Naive thymus-derived CD4-positive, alpha-beta T cell (primary cell): ENCODE measurements at regions of chr4 and their contacts with region 1.

Region 1: DNA sequence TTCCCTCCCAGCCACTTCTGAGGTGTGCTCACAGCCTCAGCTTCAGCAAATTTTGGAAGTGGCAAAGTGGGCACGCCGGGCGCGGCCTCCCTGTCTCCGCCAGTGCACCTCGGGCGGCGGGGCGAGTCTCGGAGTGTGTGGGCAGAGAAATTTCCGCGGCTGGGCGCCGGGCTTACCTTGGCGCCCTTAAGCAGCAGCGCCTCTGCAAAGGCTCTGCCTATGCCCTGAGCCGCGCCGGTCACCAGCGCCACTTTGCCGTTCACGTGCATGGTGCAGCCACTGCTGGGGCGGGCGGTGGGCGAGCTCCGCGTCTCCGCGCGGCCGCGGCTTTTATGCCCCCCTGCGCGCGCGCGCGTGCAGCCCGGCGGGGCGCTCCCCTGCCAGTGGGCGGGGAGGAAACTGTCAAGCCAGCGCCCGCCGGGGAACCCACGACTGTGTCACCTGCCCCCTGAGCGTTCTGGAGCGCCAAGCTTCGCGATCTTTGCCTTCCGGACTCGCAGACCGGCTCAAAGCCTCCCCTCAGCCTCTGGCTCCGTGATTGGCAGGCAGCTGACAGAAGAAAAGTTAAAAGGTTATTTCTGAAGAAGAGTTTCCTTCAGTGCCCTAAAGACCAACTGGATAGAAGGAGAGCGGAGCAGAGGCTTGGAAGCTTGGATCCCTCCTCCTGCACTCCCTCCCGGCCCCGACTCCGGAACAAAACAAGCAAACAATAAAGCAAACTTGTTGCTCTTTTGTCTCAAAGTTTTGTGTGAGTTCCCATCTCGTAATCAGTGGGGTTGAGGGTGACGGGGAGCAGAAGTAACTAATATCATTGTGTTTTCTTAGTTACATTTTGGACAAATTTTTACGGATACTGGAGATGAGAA is at the start of gene HPGD:
- DNase-seq: peak; percentile 33 to 79 (median 67)
- ATAC-seq: peak; percentile 90
- H3K4me3 ChIP-seq: peak within 1 kb of the TSS; percentile 66
- H3K4me3 Mint-ChIP-seq: peak within 1 kb of the TSS; percentile 77 to 91 (median 88)
- H3K27ac ChIP-seq: peak within 1 kb of the TSS; percentile 38
- H3K27ac Mint-ChIP-seq: peak within 1 kb of the TSS in 7 of 9 donors; percentile 6 to 93 (median 86)
- H3K4me1 ChIP-seq: peaks cover 0 to 5% of the 10 kb centered on the region in 2 donors
- H3K4me1 Mint-ChIP-seq: peaks cover 0 to 45% (median 17%) of the 10 kb centered on the region in 7 donors
- H3K27me3 ChIP-seq: peaks cover 0 to 4% of the 10 kb centered on the region in 2 donors
- H3K27me3 Mint-ChIP-seq: peaks cover 23 to 52% (median 38%) of the 10 kb centered on the region in 5 donors
- total RNA-seq, gene HPGD: 2.5 to 13.5 (median 4.6) TPM

Region 2: DNA sequence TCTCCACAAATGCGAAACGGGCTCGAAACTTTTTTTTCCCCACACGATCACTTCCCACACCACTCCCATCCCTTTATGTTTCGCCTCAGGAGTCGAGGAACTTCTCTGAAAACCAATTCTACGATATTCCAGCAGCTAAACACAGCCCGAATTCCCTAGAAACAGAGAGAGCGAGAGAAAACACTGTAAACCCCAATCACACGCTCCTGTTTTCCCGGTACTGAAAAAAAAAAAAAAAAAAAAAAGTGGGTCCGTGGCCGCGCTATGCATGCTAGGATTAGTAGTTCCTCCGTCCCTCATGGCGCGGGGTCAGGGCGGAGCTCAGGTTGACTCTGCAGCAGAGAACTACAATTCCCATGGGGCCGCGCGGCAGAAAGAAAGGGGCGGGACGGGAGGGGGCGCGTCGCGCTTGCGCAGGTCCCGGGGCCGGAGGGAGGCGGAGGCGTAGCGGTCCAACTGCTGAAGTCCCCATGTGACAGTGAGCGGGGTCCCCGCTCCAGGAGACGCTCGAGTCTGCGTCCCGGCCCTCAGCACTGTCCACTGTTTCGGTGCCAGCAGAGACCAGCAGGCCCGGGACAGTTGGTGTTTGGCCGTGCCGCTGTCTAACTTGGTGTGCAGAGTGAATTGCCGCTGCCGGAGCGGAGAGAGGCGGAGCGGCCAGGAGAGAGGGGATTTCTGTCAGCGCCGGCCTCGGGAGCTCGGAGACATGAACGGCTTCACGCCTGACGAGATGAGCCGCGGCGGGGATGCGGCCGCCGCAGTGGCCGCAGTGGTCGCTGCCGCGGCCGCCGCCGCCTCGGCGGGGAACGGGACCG is 1151.7 kb before region 1 on chr4 and contains the start of gene SAP30:
- CTCF ChIA-PET with region 1: no interaction called
- POLR2A ChIA-PET with region 1: no interaction called
- intact Hi-C with region 1: loop called in 1 of 2 experiments (anchors 5 kb)
- DNase-seq: peak; percentile 88 to 97 (median 91)
- ATAC-seq: peak; percentile 91
- H3K4me3 ChIP-seq: peak within 1 kb of the TSS; percentile 99
- H3K4me3 Mint-ChIP-seq: peak within 1 kb of the TSS; percentile 89 to 100 (median 98)
- H3K27ac ChIP-seq: peak within 1 kb of the TSS; percentile 82
- H3K27ac Mint-ChIP-seq: peak within 1 kb of the TSS; percentile 88 to 99 (median 97)
- H3K4me1 ChIP-seq: peaks cover 5 to 20% of the 10 kb centered on the region in 2 donors
- H3K4me1 Mint-ChIP-seq: peaks cover 14 to 46% (median 18%) of the 10 kb centered on the region in 7 donors
- H3K27me3 ChIP-seq: peaks cover 0 to 10% of the 10 kb centered on the region in 2 donors
- H3K27me3 Mint-ChIP-seq: peaks cover 2 to 29% (median 17%) of the 10 kb centered on the region in 5 donors
- total RNA-seq, gene SAP30: 0.48 to 27.4 (median 1.1) TPM

Region 3: GRCh38 chr4:174358829-174359228 is 163.6 kb before region 1 on chr4:
- CTCF ChIA-PET with region 1: no interaction called
- POLR2A ChIA-PET with region 1: no interaction called
- intact Hi-C with region 1: loop called (anchors 2 to 5 kb)
- DNase-seq: no peak
- ATAC-seq: peak; percentile 26
- H3K4me3 ChIP-seq: no peak overlapping the region
- H3K4me3 Mint-ChIP-seq: no peak overlapping the region
- H3K27ac ChIP-seq: no peak overlapping the region
- H3K27ac Mint-ChIP-seq: no peak overlapping the region
- H3K4me1 ChIP-seq: no peaks in the 10 kb centered on the region
- H3K4me1 Mint-ChIP-seq: peaks cover 0 to 23% (median 0%) of the 10 kb centered on the region in 7 donors
- H3K27me3 ChIP-seq: peaks cover 0 to 2% of the 10 kb centered on the region in 2 donors
- H3K27me3 Mint-ChIP-seq: peaks cover 8 to 28% (median 21%) of the 10 kb centered on the region in 5 donors

Region 4: GRCh38 chr4:174423257-174423944 is 99.0 kb before region 1 on chr4:
- CTCF ChIA-PET with region 1: no interaction called
- POLR2A ChIA-PET with region 1: no interaction called
- intact Hi-C with region 1: loop called in 1 of 2 experiments (anchors 2 kb)
- DNase-seq: peak in 5 of 9 donors; percentile 7 to 39 (median 27)
- ATAC-seq: peak; percentile 63
- H3K4me3 ChIP-seq: no peak overlapping the region
- H3K4me3 Mint-ChIP-seq: peak overlapping the region in 9 of 10 donors; percentile 8 to 72 (median 58)
- H3K27ac ChIP-seq: no peak overlapping the region
- H3K27ac Mint-ChIP-seq: peak overlapping the region in 2 of 9 donors; percentile 45 to 52
- H3K4me1 ChIP-seq: peaks cover 0 to 4% of the 10 kb centered on the region in 2 donors
- H3K4me1 Mint-ChIP-seq: peaks cover 6 to 43% (median 29%) of the 10 kb centered on the region in 7 donors
- H3K27me3 ChIP-seq: no peaks in the 10 kb centered on the region
- H3K27me3 Mint-ChIP-seq: peaks cover 0 to 27% (median 7%) of the 10 kb centered on the region in 5 donors

Region 5: DNA sequence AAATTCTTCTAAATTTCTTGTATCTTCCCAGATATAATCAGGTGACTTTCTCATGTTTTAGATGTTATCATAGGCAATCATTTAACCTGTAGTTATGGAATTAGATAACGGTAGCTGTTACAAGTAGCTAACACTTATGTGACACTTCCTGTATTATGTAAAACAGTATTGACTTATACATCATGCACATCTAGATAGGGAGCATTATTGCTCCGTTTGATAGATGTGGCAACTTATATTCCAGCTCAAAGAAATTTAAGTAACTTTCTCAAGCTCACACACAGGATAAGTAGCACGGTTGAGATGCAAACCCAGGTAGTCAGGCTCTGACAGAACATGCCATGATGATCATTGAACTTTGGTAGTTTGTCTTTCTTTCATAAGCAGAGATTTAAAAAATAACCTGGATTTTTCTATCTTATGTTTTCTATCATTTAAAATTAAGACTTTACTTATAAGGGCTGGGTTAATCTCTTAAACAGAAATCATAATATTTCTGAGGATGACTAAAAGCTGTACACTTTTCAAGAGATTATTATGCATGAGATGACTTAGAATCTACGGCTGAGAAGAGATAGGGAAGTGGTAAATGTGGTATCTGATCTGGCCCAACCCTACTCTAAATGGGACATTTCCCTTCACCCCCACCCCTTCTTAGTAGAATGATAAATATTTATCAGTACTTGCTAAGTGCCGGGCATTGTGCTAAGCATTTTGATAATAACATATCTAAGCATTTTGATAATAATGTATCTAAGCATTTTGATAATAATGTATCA is 69.0 kb after region 1 on chr4:
- CTCF ChIA-PET with region 1: no interaction called
- POLR2A ChIA-PET with region 1: interaction called, 4 read pairs
- intact Hi-C with region 1: loop called (anchors 1 to 5 kb)
- DNase-seq: peak in 4 of 9 donors; percentile 1 to 19 (median 8)
- ATAC-seq: peak; percentile 90
- H3K4me3 ChIP-seq: no peak overlapping the region
- H3K4me3 Mint-ChIP-seq: peak overlapping the region in 7 of 10 donors; percentile 7 to 60 (median 50)
- H3K27ac ChIP-seq: no peak overlapping the region
- H3K27ac Mint-ChIP-seq: peak overlapping the region in 6 of 9 donors; percentile 39 to 89 (median 64)
- H3K4me1 ChIP-seq: no peaks in the 10 kb centered on the region
- H3K4me1 Mint-ChIP-seq: peaks cover 6 to 15% (median 10%) of the 10 kb centered on the region in 7 donors
- H3K27me3 ChIP-seq: no peaks in the 10 kb centered on the region
- H3K27me3 Mint-ChIP-seq: peaks cover 0 to 2% (median 0%) of the 10 kb centered on the region in 5 donors